Activated CD8-positive, alpha-beta memory T cell treated with anti-CD3 and anti-CD28 coated beads, Interleukin-2, amount 10 ng/mL, durations not matched to agents 7 days and 5 days (primary cell): ENCODE measurements at regions of chr2 and their contacts with region 1.

Region 1: DNA sequence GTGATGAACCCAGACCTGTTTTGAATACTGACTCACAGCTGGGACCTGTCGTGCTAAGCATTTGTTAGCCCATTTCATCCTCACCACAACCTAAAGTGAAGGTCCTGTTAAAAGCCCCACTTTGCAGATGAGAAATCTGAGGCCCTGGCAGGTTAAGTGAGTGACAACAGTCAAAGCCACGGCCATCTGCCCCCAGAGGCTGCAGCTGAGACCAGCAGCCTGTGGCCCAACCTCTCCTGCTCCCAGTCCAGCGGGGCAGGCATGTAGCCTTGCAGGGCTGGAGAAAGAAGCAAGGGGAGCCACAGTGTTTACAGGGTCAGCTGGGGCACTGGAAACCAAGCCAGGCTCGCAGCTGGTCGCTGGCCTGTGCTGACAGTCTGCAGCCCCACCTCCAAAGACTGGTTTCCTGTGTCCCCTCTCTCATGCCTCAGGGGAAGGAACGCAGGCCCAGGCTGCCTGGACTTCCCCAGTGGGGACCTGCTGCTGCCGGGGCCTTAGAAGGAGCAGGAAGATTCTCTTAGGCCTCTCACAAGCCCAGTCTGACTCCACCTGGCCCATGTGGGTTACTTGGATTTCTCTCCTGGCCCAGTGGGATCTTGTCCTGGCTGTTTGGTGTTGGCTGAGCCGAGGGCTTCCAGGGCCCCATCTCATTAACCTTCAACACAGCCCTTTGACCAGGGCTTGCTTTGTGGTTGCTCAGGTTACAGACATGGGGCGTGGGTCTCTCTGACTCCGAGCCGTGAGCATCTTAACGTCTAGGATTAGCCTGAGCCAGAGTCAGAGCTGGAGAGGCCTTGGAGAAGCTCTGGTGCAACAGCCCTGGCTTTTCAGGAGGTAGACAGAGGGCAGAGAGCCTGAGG is 1.7 kb downstream of the INPP5D start:
- DNase-seq: peak; percentile 71
- ATAC-seq: peak; percentile 29
- H3K4me3 Mint-ChIP-seq: peak overlapping the region; percentile 98
- H3K27ac Mint-ChIP-seq: peak overlapping the region; percentile 97
- H3K4me1 Mint-ChIP-seq: peaks cover 50% of the 10 kb centered on the region
- H3K27me3 Mint-ChIP-seq: no peaks in the 10 kb centered on the region

Region 2: DNA sequence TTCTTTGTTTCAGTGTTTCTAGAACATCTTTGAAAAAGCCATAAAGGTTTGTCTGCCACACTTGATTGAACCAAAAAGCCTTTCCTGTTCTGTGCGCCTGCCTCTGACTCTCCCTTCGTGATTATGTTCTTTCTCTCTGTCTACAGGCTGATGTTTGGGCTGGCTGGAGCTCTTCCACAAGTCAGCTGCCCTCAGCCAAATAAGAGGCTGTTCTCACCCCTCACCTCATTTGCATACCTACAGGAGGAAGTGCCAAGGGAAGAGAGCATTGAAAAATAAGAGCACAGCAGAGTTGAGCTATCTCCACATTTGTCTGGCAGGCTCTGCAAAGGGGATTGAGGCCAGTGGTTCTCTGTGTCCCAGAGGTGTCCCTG is 14.1 kb after region 1 on chr2:
- CTCF ChIA-PET with region 1: interaction called, 71 read pairs
- DNase-seq: peak; percentile 57
- ATAC-seq: peak; percentile 57
- H3K4me3 Mint-ChIP-seq: no peak overlapping the region
- H3K27ac Mint-ChIP-seq: no peak overlapping the region
- H3K4me1 Mint-ChIP-seq: peaks cover 42% of the 10 kb centered on the region
- H3K27me3 Mint-ChIP-seq: no peaks in the 10 kb centered on the region

Region 3: GRCh38 chr2:233084488-233084887 is 22.7 kb after region 1 on chr2:
- CTCF ChIA-PET with region 1: interaction called, 71 read pairs
- DNase-seq: peak; percentile 90
- ATAC-seq: peak; percentile 45
- H3K4me3 Mint-ChIP-seq: peak overlapping the region; percentile 74
- H3K27ac Mint-ChIP-seq: peak overlapping the region; percentile 94
- H3K4me1 Mint-ChIP-seq: peaks cover 82% of the 10 kb centered on the region
- H3K27me3 Mint-ChIP-seq: no peaks in the 10 kb centered on the region